ENCODE measurements at regions of chr6 and their contacts with region 1.

Region 1: GRCh38 chr6:99425647-99426453 is 742 bp upstream of the PNISR start:
- DNase-seq: peak in 8 of 9 experiments; percentile 16 to 81 (median 58)
- ATAC-seq: peak; percentile 41
- H3K4me3 ChIP-seq: peak overlapping the region; percentile 97
- H3K4me3 Mint-ChIP-seq: peak overlapping the region; percentile 99
- H3K27ac ChIP-seq: peak overlapping the region; percentile 98 to 99
- H3K27ac Mint-ChIP-seq: peak overlapping the region; percentile 100
- H3K4me1 ChIP-seq: peaks cover 41% of the 10 kb centered on the region
- H3K4me1 Mint-ChIP-seq: peaks cover 55% of the 10 kb centered on the region
- H3K27me3 ChIP-seq: no peaks in the 10 kb centered on the region
- H3K27me3 Mint-ChIP-seq: no peaks in the 10 kb centered on the region
- CTCF ChIP-seq: no peak

Region 2: GRCh38 chr6:98947351-98948292 is 478.2 kb before region 1 on chr6 and contains the start of gene FBXL4:
- CTCF ChIA-PET with region 1: no interaction called
- POLR2A ChIA-PET with region 1: no interaction called
- intact Hi-C with region 1: loop called in 1 of 2 experiments (anchors 10 kb)
- DNase-seq: peak; percentile 53 to 87 (median 72)
- ATAC-seq: peak; percentile 82
- H3K4me3 ChIP-seq: peak within 1 kb of the TSS; percentile 61 to 64
- H3K4me3 Mint-ChIP-seq: peak within 1 kb of the TSS; percentile 94
- H3K27ac ChIP-seq: peak within 1 kb of the TSS; percentile 46 to 56
- H3K27ac Mint-ChIP-seq: peak within 1 kb of the TSS; percentile 96
- H3K4me1 ChIP-seq: peaks cover 11% of the 10 kb centered on the region
- H3K4me1 Mint-ChIP-seq: peaks cover 34% of the 10 kb centered on the region
- H3K27me3 ChIP-seq: no peaks in the 10 kb centered on the region
- H3K27me3 Mint-ChIP-seq: no peaks in the 10 kb centered on the region
- CTCF ChIP-seq: no peak
- total RNA-seq, gene FBXL4: 4.1 to 5.1 TPM

Region 3: DNA sequence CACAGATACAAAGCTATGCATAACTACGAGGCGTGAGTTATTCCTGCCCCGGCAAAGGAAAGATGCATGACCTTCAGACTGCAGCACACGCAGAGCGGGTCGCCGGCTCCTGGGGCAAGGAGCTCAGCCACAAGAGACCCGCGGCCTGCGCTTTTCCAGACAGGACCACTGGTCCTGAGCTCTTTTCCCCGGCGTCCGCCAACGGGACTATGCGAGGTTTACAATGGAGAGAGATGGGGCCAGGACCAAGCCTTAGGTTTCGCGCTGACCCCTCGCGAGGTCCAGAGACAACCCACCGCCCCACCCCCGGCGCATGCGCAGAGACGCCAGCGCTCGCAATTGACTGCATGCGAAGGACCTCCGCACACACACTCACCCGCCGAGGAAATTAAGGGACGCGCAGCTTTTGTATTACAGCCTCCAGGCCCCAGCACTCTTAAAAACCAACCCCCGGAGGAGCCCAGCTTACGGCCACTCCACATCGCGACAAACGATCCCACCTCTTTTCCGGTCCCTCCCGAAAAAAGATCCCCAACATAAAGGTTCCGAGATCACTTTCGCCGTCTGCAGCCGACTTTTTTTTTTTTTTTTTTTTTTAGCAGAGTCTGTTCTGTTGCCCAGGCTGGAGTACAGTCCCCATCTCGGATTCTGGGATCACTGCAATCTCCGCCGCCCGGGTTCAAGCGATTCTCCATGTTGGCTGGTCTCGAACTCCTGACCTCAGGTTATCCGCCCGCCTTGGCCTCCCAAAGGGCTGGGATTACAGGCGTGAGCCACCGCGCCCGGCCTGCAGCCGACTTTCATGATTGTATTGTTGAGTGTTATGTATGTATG is 31.9 kb before region 1 on chr6 and contains the start of gene COQ3:
- CTCF ChIA-PET with region 1: interaction called, 3 read pairs
- POLR2A ChIA-PET with region 1: interaction called, 6 read pairs
- intact Hi-C with region 1: loop called (anchors 1 to 2 kb)
- DNase-seq: peak; percentile 28 to 79 (median 65)
- ATAC-seq: peak; percentile 70
- H3K4me3 ChIP-seq: peak within 1 kb of the TSS; percentile 73 to 94
- H3K4me3 Mint-ChIP-seq: peak within 1 kb of the TSS; percentile 95
- H3K27ac ChIP-seq: peak within 1 kb of the TSS; percentile 57 to 62
- H3K27ac Mint-ChIP-seq: peak within 1 kb of the TSS; percentile 91
- H3K4me1 ChIP-seq: peaks cover 5% of the 10 kb centered on the region
- H3K4me1 Mint-ChIP-seq: peaks cover 25% of the 10 kb centered on the region
- H3K27me3 ChIP-seq: no peaks in the 10 kb centered on the region
- H3K27me3 Mint-ChIP-seq: no peaks in the 10 kb centered on the region
- CTCF ChIP-seq: no peak
- total RNA-seq, gene COQ3: 1.6 to 1.9 TPM

Region 4: DNA sequence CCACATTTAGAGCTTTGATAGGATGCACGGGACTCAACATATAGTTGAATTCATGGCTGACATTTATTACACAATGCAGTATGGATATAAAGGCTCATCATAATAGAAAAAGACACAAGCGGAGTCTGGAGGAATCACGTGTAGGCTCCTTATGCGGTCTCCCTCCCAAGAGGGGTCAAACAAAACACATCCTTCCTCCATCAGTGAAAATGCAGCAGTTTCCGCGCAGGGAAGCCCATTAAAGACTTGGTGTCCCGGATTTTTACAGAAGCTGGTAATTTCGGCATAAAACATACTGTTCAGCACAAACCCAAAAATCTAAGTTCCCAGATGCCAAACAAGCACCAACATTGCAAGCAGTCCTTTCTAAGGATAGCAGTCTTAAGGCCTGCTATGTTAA is 88.2 kb after region 1 on chr6:
- CTCF ChIA-PET with region 1: no interaction called
- POLR2A ChIA-PET with region 1: interaction called, 6 read pairs
- intact Hi-C with region 1: loop called in 1 of 2 experiments (anchors 1 kb)
- DNase-seq: no peak
- ATAC-seq: no peak
- H3K4me3 ChIP-seq: no peak overlapping the region
- H3K4me3 Mint-ChIP-seq: peak overlapping the region; percentile 93
- H3K27ac ChIP-seq: no peak overlapping the region
- H3K27ac Mint-ChIP-seq: peak overlapping the region; percentile 93
- H3K4me1 ChIP-seq: peaks cover 13% of the 10 kb centered on the region
- H3K4me1 Mint-ChIP-seq: peaks cover 33% of the 10 kb centered on the region
- H3K27me3 ChIP-seq: no peaks in the 10 kb centered on the region
- H3K27me3 Mint-ChIP-seq: no peaks in the 10 kb centered on the region
- CTCF ChIP-seq: no peak

Region 5: GRCh38 chr6:99568103-99568933 is 142.5 kb after region 1 on chr6 and contains the start of gene CCNC:
- CTCF ChIA-PET with region 1: no interaction called
- POLR2A ChIA-PET with region 1: interaction called, 12 read pairs
- intact Hi-C with region 1: loop called (anchors 1 to 2 kb)
- DNase-seq: peak; percentile 81 to 93 (median 88)
- ATAC-seq: peak; percentile 94
- H3K4me3 ChIP-seq: peak within 1 kb of the TSS; percentile 93
- H3K4me3 Mint-ChIP-seq: peak within 1 kb of the TSS; percentile 98
- H3K27ac ChIP-seq: peak within 1 kb of the TSS; percentile 76
- H3K27ac Mint-ChIP-seq: peak within 1 kb of the TSS; percentile 96
- H3K4me1 ChIP-seq: peaks cover 17% of the 10 kb centered on the region
- H3K4me1 Mint-ChIP-seq: peaks cover 40% of the 10 kb centered on the region
- H3K27me3 ChIP-seq: no peaks in the 10 kb centered on the region
- H3K27me3 Mint-ChIP-seq: no peaks in the 10 kb centered on the region
- CTCF ChIP-seq: no peak
- total RNA-seq, gene CCNC: 48.0 to 50.8 TPM

Region 6: GRCh38 chr6:100880853-100881706 is 1455.2 kb after region 1 on chr6 and contains the start of gene ASCC3:
- CTCF ChIA-PET with region 1: no interaction called
- POLR2A ChIA-PET with region 1: no interaction called
- intact Hi-C with region 1: loop called in 1 of 2 experiments (anchors 5 kb)
- DNase-seq: peak; percentile 68 to 93 (median 88)
- ATAC-seq: peak; percentile 94
- H3K4me3 ChIP-seq: peak within 1 kb of the TSS; percentile 93 to 95
- H3K4me3 Mint-ChIP-seq: peak within 1 kb of the TSS; percentile 99
- H3K27ac ChIP-seq: peak within 1 kb of the TSS; percentile 93 to 94
- H3K27ac Mint-ChIP-seq: peak within 1 kb of the TSS; percentile 99
- H3K4me1 ChIP-seq: peaks cover 28% of the 10 kb centered on the region
- H3K4me1 Mint-ChIP-seq: peaks cover 50% of the 10 kb centered on the region
- H3K27me3 ChIP-seq: no peaks in the 10 kb centered on the region
- H3K27me3 Mint-ChIP-seq: no peaks in the 10 kb centered on the region
- CTCF ChIP-seq: no peak
- total RNA-seq, gene ASCC3: 30.0 to 30.5 TPM

Measured in CD8-positive, alpha-beta T cell (primary cell).